Astrocyte of the cerebellum (primary cell): ENCODE measurements at regions of chr11 and their contacts with region 1.

Region 1: GRCh38 chr11:35800970-35801953 is 138.7 kb downstream of the TRIM44 start:
- DNase-seq: no peak
- H3K4me3 ChIP-seq: no peak overlapping the region
- CTCF ChIP-seq: no peak

Region 2: GRCh38 chr11:35629914-35630313 is 171.3 kb before region 1 on chr11:
- in situ Hi-C with region 1: loop called (anchors 25 kb)
- DNase-seq: peak; percentile 93
- H3K4me3 ChIP-seq: no peak overlapping the region
- CTCF ChIP-seq: no peak

Region 3: GRCh38 chr11:36455658-36456111 is 654.4 kb after region 1 on chr11:
- in situ Hi-C with region 1: loop called (anchors 25 kb)
- DNase-seq: peak; percentile 99
- H3K4me3 ChIP-seq: no peak overlapping the region
- CTCF ChIP-seq: no peak